PC-3 (cell line): ENCODE measurements at regions of chr1 and their contacts with region 1.

Region 1: DNA sequence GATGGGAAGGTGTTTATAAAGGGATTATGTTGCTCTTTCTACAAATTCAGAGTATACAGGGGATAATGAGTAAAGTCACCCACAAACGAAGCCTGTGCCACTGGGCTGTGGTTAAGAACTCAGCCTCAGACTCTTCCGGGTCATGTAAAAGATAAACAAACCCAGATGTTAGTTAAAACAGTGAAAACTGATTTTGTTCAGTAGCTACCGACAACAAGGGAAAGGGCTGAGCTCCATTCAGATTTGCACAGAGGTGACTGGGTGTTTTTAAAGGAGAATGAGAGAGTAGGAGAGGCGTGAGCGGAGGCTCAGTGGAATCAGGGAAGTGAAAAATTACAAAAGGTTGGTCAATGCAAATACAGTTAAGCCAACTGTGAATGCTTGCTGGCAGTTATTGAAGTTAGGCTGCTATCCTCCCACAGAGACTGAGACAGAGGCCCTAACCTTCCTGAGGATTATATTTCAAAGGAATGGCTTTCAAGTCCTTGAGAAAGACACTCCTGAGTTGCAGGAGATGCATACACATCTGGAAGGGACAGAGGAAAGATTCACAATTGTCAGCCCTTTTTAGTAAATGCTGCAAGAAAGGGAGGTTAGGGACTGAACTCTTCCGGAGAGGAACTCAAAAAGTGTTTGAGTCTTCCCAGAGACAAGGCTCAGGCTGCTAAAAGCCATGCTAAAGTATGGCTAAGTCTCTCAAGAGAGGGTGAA is 29.9 kb upstream of the SAMD13 start:
- DNase-seq: peak; percentile 17
- ATAC-seq: peak; percentile 34
- H3K4me3 ChIP-seq: no peak overlapping the region
- H3K27ac ChIP-seq: peak overlapping the region; percentile 79
- H3K4me1 ChIP-seq: peaks cover 23% of the 10 kb centered on the region
- H3K27me3 ChIP-seq: no peaks in the 10 kb centered on the region
- CTCF ChIP-seq: no peak

Region 2: GRCh38 chr1:84253891-84254290 is 17.7 kb before region 1 on chr1:
- CTCF ChIA-PET with region 1: no interaction called
- POLR2A ChIA-PET with region 1: no interaction called
- intact Hi-C with region 1: loop called (anchors 2 kb)
- DNase-seq: peak; percentile 98
- ATAC-seq: peak; percentile 99
- H3K4me3 ChIP-seq: no peak overlapping the region
- H3K27ac ChIP-seq: peak overlapping the region; percentile 94
- H3K4me1 ChIP-seq: peaks cover 37% of the 10 kb centered on the region
- H3K27me3 ChIP-seq: no peaks in the 10 kb centered on the region
- CTCF ChIP-seq: no peak